CD4-positive, alpha-beta memory T cell (primary cell): ENCODE measurements at regions of chr10 and their contacts with region 1.

Region 1: GRCh38 chr10:22666287-22667092 is 47.9 kb downstream of the PIP4K2A start:
- DNase-seq: peak; percentile 79 to 88 (median 84)
- H3K4me3 ChIP-seq: peak overlapping the region; percentile 8 to 41
- H3K4me3 Mint-ChIP-seq: peak overlapping the region; percentile 72 to 94 (median 88)
- H3K27ac ChIP-seq: peak overlapping the region; percentile 49
- H3K27ac Mint-ChIP-seq: peak overlapping the region; percentile 50 to 97 (median 90)
- H3K4me1 ChIP-seq: peaks cover 98% of the 10 kb centered on the region
- H3K4me1 Mint-ChIP-seq: peaks cover 53 to 92% (median 72%) of the 10 kb centered on the region in 4 donors
- H3K27me3 ChIP-seq: no peaks in the 10 kb centered on the region
- H3K27me3 Mint-ChIP-seq: no peaks in the 10 kb centered on the region

Region 2: GRCh38 chr10:21525367-21526183 is 1140.9 kb before region 1 on chr10 and contains the start of gene SKIDA1:
- CTCF ChIA-PET with region 1: no interaction called
- POLR2A ChIA-PET with region 1: no interaction called
- intact Hi-C with region 1: loop called (anchors 10 kb)
- DNase-seq: peak; percentile 69 to 81 (median 75)
- H3K4me3 ChIP-seq: peak within 1 kb of the TSS; percentile 55 to 78
- H3K4me3 Mint-ChIP-seq: peak within 1 kb of the TSS; percentile 93 to 99 (median 96)
- H3K27ac ChIP-seq: peak within 1 kb of the TSS; percentile 63
- H3K27ac Mint-ChIP-seq: peak within 1 kb of the TSS; percentile 84 to 98 (median 98)
- H3K4me1 ChIP-seq: peaks cover 23% of the 10 kb centered on the region
- H3K4me1 Mint-ChIP-seq: peaks cover 9 to 36% (median 21%) of the 10 kb centered on the region in 4 donors
- H3K27me3 ChIP-seq: peaks cover 7% of the 10 kb centered on the region
- H3K27me3 Mint-ChIP-seq: peaks cover 9 to 12% of the 10 kb centered on the region in 2 donors
- total RNA-seq, gene SKIDA1: 0.39 to 0.73 TPM

Region 3: DNA sequence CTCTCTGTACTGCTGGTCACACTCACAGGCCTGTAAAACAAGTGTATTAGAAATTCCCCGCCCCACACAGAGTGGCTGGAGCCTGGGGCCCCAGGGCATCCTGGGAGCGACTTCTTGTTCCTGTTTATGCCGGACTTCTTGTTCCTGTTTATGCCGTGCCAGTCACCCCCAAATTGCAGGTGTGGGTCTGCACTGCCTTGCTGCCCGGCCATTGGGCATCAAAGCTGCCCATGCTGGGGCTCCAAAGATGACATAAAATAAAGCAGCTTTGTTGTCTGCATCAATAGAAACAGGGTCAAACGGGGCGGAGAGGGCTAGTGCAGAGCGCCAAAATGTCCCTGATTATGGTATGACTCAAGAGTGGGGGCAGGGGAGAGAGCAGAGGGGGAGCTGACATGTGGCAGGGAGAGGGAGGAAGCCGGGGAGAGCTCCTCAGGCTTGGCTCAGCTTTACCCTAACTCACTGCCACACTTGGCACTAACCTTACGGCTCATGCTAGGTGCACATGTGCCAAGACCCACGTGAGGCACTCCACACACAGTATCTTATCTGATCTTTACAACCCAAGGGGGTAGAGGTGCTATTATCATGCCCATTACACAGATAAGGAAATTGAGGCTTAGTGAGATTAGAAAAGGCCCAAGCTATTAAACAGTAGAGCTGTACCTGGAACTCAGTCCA is 50.5 kb before region 1 on chr10:
- CTCF ChIA-PET with region 1: interaction called, 13 read pairs
- POLR2A ChIA-PET with region 1: interaction called, 895 read pairs
- intact Hi-C with region 1: no loop called
- DNase-seq: peak in 4 of 5 donors; percentile 32 to 81 (median 44)
- H3K4me3 ChIP-seq: peak overlapping the region; percentile 2 to 6
- H3K4me3 Mint-ChIP-seq: peak overlapping the region; percentile 53 to 85 (median 75)
- H3K27ac ChIP-seq: peak overlapping the region; percentile 53
- H3K27ac Mint-ChIP-seq: peak overlapping the region; percentile 87 to 98 (median 95)
- H3K4me1 ChIP-seq: peaks cover 97% of the 10 kb centered on the region
- H3K4me1 Mint-ChIP-seq: peaks cover 78 to 100% (median 91%) of the 10 kb centered on the region in 4 donors
- H3K27me3 ChIP-seq: no peaks in the 10 kb centered on the region
- H3K27me3 Mint-ChIP-seq: no peaks in the 10 kb centered on the region

Region 4: DNA sequence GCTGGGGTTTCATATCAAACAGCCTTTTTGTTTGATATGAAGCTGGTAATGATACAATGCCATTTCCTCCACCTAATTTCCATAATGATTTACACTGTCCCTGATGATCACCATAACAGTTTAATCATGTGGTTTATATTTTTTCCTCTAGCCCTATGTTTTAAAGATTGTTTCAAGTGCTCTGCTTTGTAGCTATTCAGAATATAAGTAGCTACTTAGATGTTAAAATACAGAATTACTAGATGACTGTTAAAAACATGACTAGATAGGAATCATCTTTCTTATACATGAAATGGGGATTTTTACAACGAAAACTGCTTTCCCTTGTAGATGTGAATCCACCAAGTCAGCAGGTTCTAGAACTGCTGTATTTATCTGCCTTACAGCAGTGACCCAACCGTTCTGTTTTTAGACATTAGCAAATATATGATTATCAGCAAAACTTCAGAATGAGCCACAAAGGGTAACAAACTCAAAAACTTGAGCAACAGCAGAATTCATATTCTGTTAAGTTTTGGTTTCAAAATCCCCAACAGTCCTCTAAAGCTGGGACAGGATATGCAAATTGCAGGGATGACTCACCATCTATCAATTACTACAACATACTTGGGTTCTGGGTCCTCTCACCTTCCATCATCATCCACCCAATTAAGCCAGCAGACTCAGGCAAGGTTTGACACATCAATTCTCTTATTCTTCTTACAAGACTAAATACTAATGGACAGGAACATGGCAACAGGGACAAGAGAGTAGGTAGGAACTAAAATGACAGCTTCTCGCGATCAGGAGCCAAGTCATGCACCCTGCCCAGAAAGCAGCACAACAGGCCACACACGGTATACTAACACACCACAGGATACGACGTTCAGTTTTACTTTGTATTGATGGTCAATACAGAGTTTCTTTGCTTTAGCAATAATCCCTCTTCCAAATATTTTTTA is 36.0 kb before region 1 on chr10:
- CTCF ChIA-PET with region 1: interaction called, 3 read pairs
- POLR2A ChIA-PET with region 1: interaction called, 895 read pairs
- intact Hi-C with region 1: loop called (anchors 1 kb)
- DNase-seq: peak; percentile 66 to 86 (median 68)
- H3K4me3 ChIP-seq: peak overlapping the region; percentile 8 to 38
- H3K4me3 Mint-ChIP-seq: peak overlapping the region; percentile 78 to 86 (median 80)
- H3K27ac ChIP-seq: peak overlapping the region; percentile 64
- H3K27ac Mint-ChIP-seq: peak overlapping the region; percentile 87 to 99 (median 96)
- H3K4me1 ChIP-seq: peaks cover 99% of the 10 kb centered on the region
- H3K4me1 Mint-ChIP-seq: peaks cover 82 to 98% (median 94%) of the 10 kb centered on the region in 4 donors
- H3K27me3 ChIP-seq: no peaks in the 10 kb centered on the region
- H3K27me3 Mint-ChIP-seq: no peaks in the 10 kb centered on the region

Region 5: GRCh38 chr10:22682237-22683139 is 16.0 kb after region 1 on chr10:
- CTCF ChIA-PET with region 1: interaction called, 23 read pairs
- POLR2A ChIA-PET with region 1: interaction called, 153 read pairs
- intact Hi-C with region 1: loop called (anchors 1 kb)
- DNase-seq: peak; percentile 77 to 86 (median 81)
- H3K4me3 ChIP-seq: peak overlapping the region in 1 of 2 donors; percentile 15
- H3K4me3 Mint-ChIP-seq: peak overlapping the region; percentile 65 to 92 (median 82)
- H3K27ac ChIP-seq: peak overlapping the region; percentile 81
- H3K27ac Mint-ChIP-seq: peak overlapping the region; percentile 93 to 100 (median 97)
- H3K4me1 ChIP-seq: peaks cover 100% of the 10 kb centered on the region
- H3K4me1 Mint-ChIP-seq: peaks cover 75 to 96% (median 88%) of the 10 kb centered on the region in 4 donors
- H3K27me3 ChIP-seq: no peaks in the 10 kb centered on the region
- H3K27me3 Mint-ChIP-seq: no peaks in the 10 kb centered on the region